ENCODE measurements at regions of chr21 and their contacts with region 1.

Region 1: DNA sequence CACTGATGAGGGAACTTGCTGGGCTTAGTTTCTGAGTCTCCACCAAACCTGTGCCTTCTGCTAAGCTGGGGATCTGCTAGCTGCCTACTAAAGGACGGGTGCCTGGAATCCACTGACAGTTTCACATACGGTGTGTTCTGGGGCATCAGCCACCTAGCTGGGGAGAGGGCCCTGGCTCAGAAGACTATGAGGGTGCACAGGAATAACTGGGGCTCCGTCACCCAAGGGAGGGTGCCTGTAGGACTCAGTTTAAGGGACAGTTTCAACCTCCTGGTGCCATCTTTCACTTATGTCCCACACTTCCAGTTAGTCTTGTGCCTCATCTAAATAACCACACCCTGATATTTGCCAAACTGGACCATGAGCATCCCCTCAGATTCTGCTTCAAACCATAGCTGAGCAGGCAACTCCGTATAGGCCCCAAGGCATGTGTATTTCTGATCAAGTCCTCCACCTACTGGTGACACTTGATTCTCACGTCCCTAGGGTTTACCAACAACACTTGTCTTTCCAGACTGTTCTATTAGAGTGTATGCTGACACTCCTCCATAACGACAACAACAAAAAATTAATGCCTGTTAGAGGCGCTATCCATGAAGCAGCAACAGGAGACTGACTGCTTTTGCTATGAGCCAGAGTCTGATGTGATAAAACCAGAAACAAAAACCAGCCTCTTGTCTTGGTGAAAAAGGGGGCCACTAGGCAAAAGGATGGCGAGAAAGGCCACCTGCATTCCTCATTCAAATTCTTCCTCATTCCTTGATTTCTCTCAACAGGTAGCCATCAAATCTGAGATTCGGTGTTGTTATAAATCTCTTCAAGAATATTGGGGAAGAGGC is 55.0 kb upstream of the PAXBP1 start:
- DNase-seq: peak; percentile 43
- H3K4me3 Mint-ChIP-seq: no peak overlapping the region
- H3K27ac Mint-ChIP-seq: no peak overlapping the region
- H3K4me1 Mint-ChIP-seq: no peaks in the 10 kb centered on the region
- H3K27me3 Mint-ChIP-seq: peaks cover 1% of the 10 kb centered on the region

Region 2: GRCh38 chr21:32653311-32653901 is 173.1 kb before region 1 on chr21:
- CTCF ChIA-PET with region 1: interaction called, 9 read pairs
- POLR2A ChIA-PET with region 1: no interaction called
- intact Hi-C with region 1: loop called (anchors 1 kb)
- DNase-seq: peak; percentile 44
- H3K4me3 Mint-ChIP-seq: no peak overlapping the region
- H3K27ac Mint-ChIP-seq: no peak overlapping the region
- H3K4me1 Mint-ChIP-seq: peaks cover 8% of the 10 kb centered on the region
- H3K27me3 Mint-ChIP-seq: no peaks in the 10 kb centered on the region

Region 3: GRCh38 chr21:32802954-32803353 is 23.6 kb before region 1 on chr21:
- CTCF ChIA-PET with region 1: no interaction called
- POLR2A ChIA-PET with region 1: no interaction called
- intact Hi-C with region 1: no loop called
- DNase-seq: no peak
- H3K4me3 Mint-ChIP-seq: no peak overlapping the region
- H3K27ac Mint-ChIP-seq: no peak overlapping the region
- H3K4me1 Mint-ChIP-seq: peaks cover 20% of the 10 kb centered on the region
- H3K27me3 Mint-ChIP-seq: no peaks in the 10 kb centered on the region

Measured in activated CD4-positive, alpha-beta memory T cell treated with anti-CD3 and anti-CD28 coated beads for 36 hours (primary cell).